Activated CD4-positive, alpha-beta T cell treated with anti-CD3 and anti-CD28 coated beads, Interleukin-2, amount 10 ng/mL, durations not matched to agents 24 days and 14 days (primary cell): ENCODE measurements at regions of chr10 and their contacts with region 1.

Region 1: DNA sequence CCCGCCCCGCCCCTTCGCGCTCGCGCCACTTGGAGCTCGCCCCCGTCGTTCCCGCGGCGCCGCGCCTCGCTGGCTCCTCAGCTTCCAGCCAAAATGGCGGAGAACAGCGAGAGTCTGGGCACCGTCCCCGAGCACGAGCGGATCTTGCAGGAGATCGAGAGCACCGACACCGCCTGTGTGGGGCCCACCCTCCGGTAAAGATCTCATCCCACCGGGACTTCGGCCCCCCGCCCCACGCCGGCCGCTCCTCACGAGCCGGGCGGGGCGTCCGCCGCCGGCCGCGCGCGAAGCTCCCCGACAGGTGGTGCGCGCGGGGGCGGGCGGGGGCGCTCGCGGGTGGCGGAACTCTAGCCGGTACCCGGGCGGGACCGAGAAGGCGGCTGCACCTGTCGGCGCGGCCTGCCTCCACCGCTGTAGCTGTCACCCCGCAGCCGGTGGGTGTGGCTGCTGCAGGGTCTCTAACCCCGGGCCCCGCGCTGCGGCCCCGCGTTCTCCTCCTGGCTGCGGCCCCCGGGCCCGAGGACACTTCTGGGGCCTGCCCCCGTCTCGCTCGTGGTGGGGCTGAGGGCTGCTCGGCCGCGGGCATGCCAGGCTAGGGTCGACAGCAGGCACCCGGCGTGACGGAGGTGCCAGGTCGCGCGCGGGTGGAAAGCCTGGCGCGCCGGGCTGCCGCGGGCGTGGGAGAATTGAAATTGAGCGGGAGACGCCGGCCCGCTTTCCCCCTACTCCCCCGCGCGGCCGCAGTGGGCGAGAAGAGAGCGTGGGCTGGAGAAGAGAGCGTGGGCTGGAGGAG is at the start of gene EXOC6:
- DNase-seq: peak; percentile 94
- H3K4me3 Mint-ChIP-seq: peak within 1 kb of the TSS; percentile 81
- H3K27ac Mint-ChIP-seq: peak within 1 kb of the TSS; percentile 87
- H3K4me1 Mint-ChIP-seq: peaks cover 31% of the 10 kb centered on the region
- H3K27me3 Mint-ChIP-seq: no peaks in the 10 kb centered on the region
- total RNA-seq, gene EXOC6: 13.1 and 14.2 TPM in 2 replicates

Region 2: GRCh38 chr10:92592761-92593618 is 255.6 kb before region 1 on chr10 and contains the start of gene KIF11:
- intact Hi-C with region 1: loop called (anchors 5 kb)
- DNase-seq: peak; percentile 99
- H3K4me3 Mint-ChIP-seq: peak within 1 kb of the TSS; percentile 99
- H3K27ac Mint-ChIP-seq: peak within 1 kb of the TSS; percentile 98
- H3K4me1 Mint-ChIP-seq: peaks cover 52% of the 10 kb centered on the region
- H3K27me3 Mint-ChIP-seq: no peaks in the 10 kb centered on the region
- total RNA-seq, gene KIF11: 39.0 and 39.9 TPM in 2 replicates

Region 3: GRCh38 chr10:92830478-92831389 is 17.9 kb before region 1 on chr10:
- intact Hi-C with region 1: loop called (anchors 2 kb)
- DNase-seq: peak; percentile 61
- H3K4me3 Mint-ChIP-seq: peak overlapping the region; percentile 77
- H3K27ac Mint-ChIP-seq: peak overlapping the region; percentile 85
- H3K4me1 Mint-ChIP-seq: peaks cover 10% of the 10 kb centered on the region
- H3K27me3 Mint-ChIP-seq: no peaks in the 10 kb centered on the region

Region 4: GRCh38 chr10:93496322-93497041 is 647.8 kb after region 1 on chr10 and contains the start of gene CEP55:
- intact Hi-C with region 1: loop called (anchors 5 kb)
- DNase-seq: peak; percentile 99
- H3K4me3 Mint-ChIP-seq: peak within 1 kb of the TSS; percentile 90
- H3K27ac Mint-ChIP-seq: peak within 1 kb of the TSS; percentile 93
- H3K4me1 Mint-ChIP-seq: peaks cover 34% of the 10 kb centered on the region
- H3K27me3 Mint-ChIP-seq: no peaks in the 10 kb centered on the region
- total RNA-seq, gene CEP55: 58.5 and 59.3 TPM in 2 replicates